Body of pancreas (tissue), 4 donors: ENCODE measurements at regions of chr18 and their contacts with region 1.

Region 1: DNA sequence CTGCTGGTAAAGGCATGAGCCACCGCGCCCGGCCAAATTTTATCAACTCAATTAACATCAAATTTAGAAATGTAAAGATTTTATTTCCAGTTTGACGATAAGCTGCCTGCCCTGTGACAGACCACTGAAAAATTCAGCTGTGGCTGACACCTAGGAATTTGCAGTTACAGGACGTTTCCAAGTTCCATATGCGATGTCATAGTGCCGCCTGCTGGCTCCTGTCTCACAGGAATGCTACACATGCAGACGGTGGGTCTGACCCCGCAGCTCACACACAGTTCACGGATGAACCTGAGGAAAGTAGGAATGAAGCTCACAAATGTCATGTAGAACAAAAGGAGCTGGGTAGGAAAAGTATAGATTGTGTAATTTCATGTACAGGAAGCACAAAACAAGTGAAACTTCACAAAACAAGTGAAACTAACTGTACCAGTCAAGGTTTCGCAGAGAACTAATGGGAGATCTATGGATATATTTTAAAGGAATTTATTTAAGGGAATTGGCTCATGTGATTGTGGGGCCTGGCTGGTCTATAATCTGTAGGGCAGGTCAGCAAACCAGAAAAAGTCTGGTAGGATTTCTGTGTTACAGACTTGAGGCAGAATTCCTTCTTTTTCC is 13.2 kb upstream of the SEH1L start:
- DNase-seq: peak; percentile 80 to 88 (median 86)
- ATAC-seq: peak; percentile 95
- H3K4me3 ChIP-seq: no peak overlapping the region
- H3K27ac ChIP-seq: no peak overlapping the region
- H3K4me1 ChIP-seq: no peaks in the 10 kb centered on the region
- H3K27me3 ChIP-seq: no peaks in the 10 kb centered on the region
- CTCF ChIP-seq: peak; percentile 59 to 90 (median 89)
- POLR2A ChIP-seq: no peak

Region 2: GRCh38 chr18:12497291-12497690 is 437.3 kb before region 1 on chr18:
- intact Hi-C with region 1: no loop called
- DNase-seq: no peak
- ATAC-seq: no peak
- H3K4me3 ChIP-seq: no peak overlapping the region
- H3K27ac ChIP-seq: no peak overlapping the region
- H3K4me1 ChIP-seq: no peaks in the 10 kb centered on the region
- H3K27me3 ChIP-seq: no peaks in the 10 kb centered on the region
- CTCF ChIP-seq: no peak
- POLR2A ChIP-seq: no peak

Region 3: GRCh38 chr18:12726774-12727550 is 207.6 kb before region 1 on chr18:
- intact Hi-C with region 1: loop called (anchors 5 kb)
- DNase-seq: peak; percentile 55 to 76 (median 65)
- ATAC-seq: peak; percentile 76
- H3K4me3 ChIP-seq: no peak overlapping the region
- H3K27ac ChIP-seq: no peak overlapping the region
- H3K4me1 ChIP-seq: no peaks in the 10 kb centered on the region
- H3K27me3 ChIP-seq: no peaks in the 10 kb centered on the region
- CTCF ChIP-seq: peak; percentile 58 to 93 (median 86)
- POLR2A ChIP-seq: no peak